Activated naive CD8-positive, alpha-beta T cell treated with anti-CD3 and anti-CD28 coated beads, Interleukin-2, amount 10 ng/mL, durations not matched to agents 7 days and 5 days (primary cell): ENCODE measurements at regions of chr20 and their contacts with region 1.

Region 1: DNA sequence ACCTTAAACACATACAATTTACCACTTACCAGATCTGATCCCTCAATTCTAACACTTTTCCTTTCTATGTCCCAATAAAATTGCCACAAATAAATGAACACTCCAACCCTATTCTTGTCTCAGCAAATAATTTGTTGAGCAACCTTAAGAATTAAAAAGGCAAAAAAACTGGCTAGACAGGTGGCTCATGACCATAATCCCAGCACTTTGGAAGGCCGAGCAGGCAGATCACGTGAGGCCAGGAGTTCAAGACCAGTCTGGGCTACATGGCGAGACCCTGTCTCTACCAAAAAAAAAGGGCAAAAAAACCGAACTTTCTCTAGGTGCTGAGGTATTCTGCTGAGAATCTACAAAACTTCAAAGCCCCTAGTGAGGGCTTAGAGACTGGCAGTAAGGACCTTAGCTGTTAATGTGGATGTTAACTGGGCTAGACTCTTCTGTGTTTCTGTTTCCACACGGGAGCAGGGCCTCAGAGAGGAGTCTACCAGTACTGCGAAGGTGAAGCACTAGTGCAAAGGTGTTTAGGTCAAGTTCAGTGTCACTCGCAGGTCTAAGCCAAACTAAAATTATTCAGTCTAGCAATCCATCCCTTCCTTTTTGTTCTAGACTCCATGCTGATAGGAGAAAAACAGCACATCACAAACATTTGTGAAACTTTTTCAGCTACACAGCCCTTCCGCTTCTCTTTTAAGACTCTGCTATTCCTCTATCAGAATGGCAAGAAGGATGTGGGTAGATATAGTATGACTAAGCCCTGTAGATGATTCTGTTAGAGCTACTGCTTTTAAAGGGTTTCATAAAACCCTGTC is 2.6 kb downstream of the FASTKD5 start:
- DNase-seq: no peak
- ATAC-seq: peak; percentile 86
- H3K4me3 Mint-ChIP-seq: peak overlapping the region; percentile 90
- H3K27ac Mint-ChIP-seq: peak overlapping the region; percentile 88
- H3K4me1 Mint-ChIP-seq: peaks cover 38% of the 10 kb centered on the region
- H3K27me3 Mint-ChIP-seq: no peaks in the 10 kb centered on the region

Region 2: DNA sequence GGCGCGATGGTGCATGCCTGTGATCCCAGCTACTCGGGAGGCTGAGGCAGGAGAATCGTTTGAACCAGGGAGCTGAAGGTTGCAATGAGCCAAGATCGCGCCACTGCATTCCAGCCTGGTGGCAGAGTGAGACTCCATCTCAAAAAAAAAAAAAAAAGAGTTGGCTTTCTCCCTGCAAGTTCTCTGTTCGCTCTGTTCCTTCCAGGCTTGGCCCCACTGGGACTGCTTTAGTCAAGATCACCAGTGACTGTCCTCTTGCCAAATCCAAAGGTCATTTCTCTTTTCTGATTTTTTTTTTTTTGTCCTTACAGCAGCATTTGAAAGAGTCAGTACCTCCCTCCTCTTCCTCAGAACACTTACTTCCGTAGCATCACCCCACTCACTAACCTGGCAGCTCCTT is 124.4 kb before region 1 on chr20:
- POLR2A ChIA-PET with region 1: no interaction called
- DNase-seq: no peak
- ATAC-seq: no peak
- H3K4me3 Mint-ChIP-seq: no peak overlapping the region
- H3K27ac Mint-ChIP-seq: no peak overlapping the region
- H3K4me1 Mint-ChIP-seq: no peaks in the 10 kb centered on the region
- H3K27me3 Mint-ChIP-seq: no peaks in the 10 kb centered on the region

Region 3: GRCh38 chr20:3121271-3121911 is 35.6 kb before region 1 on chr20:
- POLR2A ChIA-PET with region 1: interaction called, 21 read pairs
- DNase-seq: peak; percentile 42
- ATAC-seq: peak; percentile 90
- H3K4me3 Mint-ChIP-seq: peak overlapping the region; percentile 81
- H3K27ac Mint-ChIP-seq: peak overlapping the region; percentile 97
- H3K4me1 Mint-ChIP-seq: peaks cover 38% of the 10 kb centered on the region
- H3K27me3 Mint-ChIP-seq: no peaks in the 10 kb centered on the region

Region 4: GRCh38 chr20:3209257-3209945 is 52.4 kb after region 1 on chr20 and contains the start of gene ITPA:
- POLR2A ChIA-PET with region 1: interaction called, 15 read pairs
- DNase-seq: peak; percentile 72
- ATAC-seq: peak; percentile 45
- H3K4me3 Mint-ChIP-seq: peak within 1 kb of the TSS; percentile 88
- H3K27ac Mint-ChIP-seq: peak within 1 kb of the TSS; percentile 92
- H3K4me1 Mint-ChIP-seq: peaks cover 14% of the 10 kb centered on the region
- H3K27me3 Mint-ChIP-seq: no peaks in the 10 kb centered on the region
- total RNA-seq, gene ITPA: 44.3 to 44.4 TPM